ENCODE measurements at regions of chrX and their contacts with region 1.

Region 1: DNA sequence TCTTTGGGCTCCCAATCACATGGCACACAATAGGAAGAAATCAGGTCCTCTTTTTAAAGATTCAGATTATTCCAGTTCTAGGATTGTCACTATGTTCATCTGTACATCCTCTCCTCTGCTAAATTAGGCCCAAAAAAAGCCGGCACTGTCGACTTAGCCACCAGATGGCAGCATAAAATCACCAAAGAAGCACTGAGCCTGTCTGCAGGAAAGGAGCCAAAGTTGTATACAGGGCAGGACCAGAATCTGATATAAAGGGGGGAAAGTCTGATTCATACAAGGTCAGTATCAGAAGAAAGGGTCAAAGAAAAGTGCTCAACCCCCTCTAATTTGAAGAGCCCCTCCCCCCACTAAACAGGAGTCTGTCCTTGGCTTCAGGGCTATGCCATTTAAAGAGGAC is 292.5 kb downstream of the CHIC1 start:
- DNase-seq: peak; percentile 60
- H3K4me3 ChIP-seq: no peak overlapping the region
- H3K27ac ChIP-seq: no peak overlapping the region
- H3K4me1 ChIP-seq: no peaks in the 10 kb centered on the region
- CTCF ChIP-seq: peak; percentile 82

Region 2: GRCh38 chrX:74015379-74016019 is 160.0 kb after region 1 on chrX:
- CTCF ChIA-PET with region 1: no interaction called
- POLR2A ChIA-PET with region 1: no interaction called
- intact Hi-C with region 1: loop called (anchors 1 kb)
- DNase-seq: peak; percentile 66
- H3K4me3 ChIP-seq: no peak overlapping the region
- H3K27ac ChIP-seq: no peak overlapping the region
- H3K4me1 ChIP-seq: no peaks in the 10 kb centered on the region
- CTCF ChIP-seq: peak; percentile 81

Region 3: GRCh38 chrX:74133156-74133796 is 277.7 kb after region 1 on chrX:
- CTCF ChIA-PET with region 1: no interaction called
- POLR2A ChIA-PET with region 1: no interaction called
- intact Hi-C with region 1: loop called (anchors 1 kb)
- DNase-seq: peak; percentile 62
- H3K4me3 ChIP-seq: no peak overlapping the region
- H3K27ac ChIP-seq: no peak overlapping the region
- H3K4me1 ChIP-seq: no peaks in the 10 kb centered on the region
- CTCF ChIP-seq: peak; percentile 76

Region 4: DNA sequence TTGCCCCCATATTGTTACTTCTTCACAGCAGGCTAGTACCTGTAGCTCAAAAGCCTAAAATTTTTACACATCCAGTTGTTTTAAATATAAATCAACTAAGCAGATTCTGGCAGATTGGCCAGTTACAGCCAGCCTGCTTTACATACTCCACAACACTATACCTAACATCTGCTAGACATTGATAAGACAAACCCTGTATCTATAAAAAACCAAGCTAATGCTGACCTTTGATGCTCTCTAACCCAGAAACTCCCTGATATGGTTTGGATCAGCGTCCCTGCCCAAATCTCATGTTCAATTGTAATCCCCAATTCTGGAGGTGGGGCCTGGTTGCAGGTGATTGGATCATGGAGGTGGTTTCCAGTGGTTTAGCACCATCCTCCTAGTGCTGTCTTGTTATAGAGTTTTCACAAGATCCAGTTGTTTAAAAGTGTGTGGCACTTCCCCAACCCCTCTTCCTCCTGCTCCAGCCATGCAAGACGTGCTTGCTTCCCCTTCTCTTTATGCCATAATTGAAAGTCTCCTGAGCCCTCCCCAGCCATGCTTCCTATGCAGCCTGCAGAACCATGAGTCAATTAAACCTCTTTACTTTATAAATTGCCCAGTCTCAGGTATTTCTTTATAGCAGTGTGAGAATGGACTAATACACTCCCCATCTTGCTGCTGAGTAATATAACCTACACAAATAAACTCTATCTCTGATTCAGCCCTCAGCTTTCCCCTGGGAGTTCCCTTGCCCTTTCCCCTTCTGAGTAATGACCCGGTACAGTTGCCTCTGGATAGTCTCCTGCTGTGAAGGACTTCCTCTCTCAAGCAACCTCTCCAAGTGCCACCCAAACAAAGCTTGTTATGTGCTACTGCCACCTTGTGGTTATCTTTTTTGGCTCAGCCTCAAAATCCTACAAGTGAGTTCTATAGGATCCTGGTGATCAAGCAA is 488.1 kb after region 1 on chrX:
- CTCF ChIA-PET with region 1: no interaction called
- POLR2A ChIA-PET with region 1: no interaction called
- intact Hi-C with region 1: loop called (anchors 1 kb)
- DNase-seq: peak; percentile 64
- H3K4me3 ChIP-seq: no peak overlapping the region
- H3K27ac ChIP-seq: no peak overlapping the region
- H3K4me1 ChIP-seq: no peaks in the 10 kb centered on the region
- CTCF ChIP-seq: peak; percentile 77

Region 5: DNA sequence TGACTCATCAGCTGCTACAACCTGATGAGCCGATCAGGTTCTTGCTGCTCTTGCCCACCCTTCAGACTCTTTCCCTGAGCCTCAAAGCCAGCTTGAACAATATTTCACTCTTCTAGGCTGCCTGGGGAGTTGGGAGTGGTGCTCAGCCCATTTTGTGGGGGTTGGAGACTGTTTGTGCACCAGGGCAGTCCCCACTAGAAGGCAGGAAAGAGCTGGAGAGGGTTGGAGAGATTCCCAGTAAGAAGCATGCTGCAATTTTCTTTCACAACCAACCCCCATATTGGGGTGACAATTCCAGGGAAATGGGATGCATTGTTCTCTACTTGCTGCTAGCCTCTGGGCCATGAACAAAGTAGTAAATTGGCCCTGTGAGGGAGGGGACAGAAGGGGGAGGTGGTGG is 609.9 kb after region 1 on chrX:
- CTCF ChIA-PET with region 1: no interaction called
- POLR2A ChIA-PET with region 1: no interaction called
- intact Hi-C with region 1: no loop called
- DNase-seq: no peak
- H3K4me3 ChIP-seq: no peak overlapping the region
- H3K27ac ChIP-seq: no peak overlapping the region
- H3K4me1 ChIP-seq: no peaks in the 10 kb centered on the region
- CTCF ChIP-seq: no peak